GM12878 (cell line): ENCODE measurements at regions of chr20 and their contacts with region 1.

Region 1: DNA sequence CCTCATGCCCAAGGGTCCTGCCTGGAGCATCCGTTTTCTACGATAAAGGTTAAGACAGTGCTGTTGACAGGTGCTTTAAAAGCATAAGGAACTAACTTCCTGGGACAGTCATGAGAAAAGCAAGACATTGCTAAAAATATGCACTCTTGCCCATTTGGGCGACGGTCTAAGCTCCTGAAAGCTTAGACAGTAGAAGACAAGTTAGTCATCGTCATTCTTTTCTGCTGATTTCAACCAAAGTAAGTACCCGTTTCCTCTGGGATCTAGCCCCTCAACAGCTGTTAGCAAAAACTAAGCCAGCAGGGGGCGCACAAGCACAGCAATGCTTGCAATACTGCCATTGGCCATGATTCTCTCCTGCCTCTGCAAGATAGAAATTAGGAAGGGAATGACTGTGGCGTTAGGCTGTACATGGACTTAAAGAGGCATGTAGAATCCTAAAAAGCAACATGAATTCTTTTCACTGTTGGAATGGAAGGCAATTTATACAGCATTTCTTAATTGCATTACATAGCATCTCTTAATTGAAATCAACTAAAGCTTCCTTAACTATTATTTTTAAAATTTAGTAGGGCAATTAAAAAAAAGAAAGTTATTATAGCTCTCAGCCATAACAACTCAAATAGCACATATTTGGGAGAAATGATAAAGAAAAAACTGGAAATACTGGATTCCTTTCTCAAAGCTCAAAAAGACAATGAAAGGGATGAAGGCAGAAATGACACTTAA is 147.8 kb upstream of the RALGAPA2 start:
- DNase-seq: peak; percentile 15
- ATAC-seq: peak; percentile 98
- H3K4me3 ChIP-seq: no peak overlapping the region
- H3K27ac ChIP-seq: no peak overlapping the region
- H3K4me1 ChIP-seq: no peaks in the 10 kb centered on the region
- H3K27me3 ChIP-seq: no peaks in the 10 kb centered on the region
- CTCF ChIP-seq: peak; percentile 85 to 94 (median 88)
- EP300 ChIP-seq: no peak
- POLR2A ChIP-seq: no peak
- RAD21 ChIP-seq: peak; percentile 84

Region 2: DNA sequence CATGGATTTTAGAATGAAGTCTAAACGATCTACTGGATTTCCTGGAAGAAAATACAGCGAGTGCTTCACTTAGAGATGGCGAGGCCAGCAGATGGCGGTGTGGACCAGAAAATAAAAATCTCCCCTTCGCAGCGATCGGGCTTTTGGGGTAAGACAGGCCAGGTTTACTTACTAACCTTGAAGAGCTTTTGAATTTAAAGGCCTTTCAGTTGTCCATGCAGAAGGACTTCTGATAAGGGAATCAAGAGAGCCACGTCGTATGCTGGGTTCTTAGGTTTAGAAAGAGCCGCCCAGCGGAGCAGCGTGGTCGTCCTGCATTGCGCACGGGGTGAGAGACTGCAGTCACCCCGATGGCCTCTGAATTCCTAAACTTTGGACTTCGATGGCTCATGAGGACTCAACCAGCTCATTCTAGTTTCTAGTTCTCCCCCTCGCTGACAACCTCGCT is 22.6 kb before region 1 on chr20:
- CTCF ChIA-PET with region 1: interaction called, 12 read pairs
- POLR2A ChIA-PET with region 1: no interaction called
- RAD21 ChIA-PET with region 1: no interaction called
- SMC1A ChIA-PET with region 1: interaction called, 5 read pairs
- in situ Hi-C with region 1: no loop called
- intact Hi-C with region 1: no loop called
- DNase-seq: no peak
- ATAC-seq: peak; percentile 36; the same call in 1 of the 3 replicates
- H3K4me3 ChIP-seq: no peak overlapping the region
- H3K27ac ChIP-seq: no peak overlapping the region
- H3K4me1 ChIP-seq: no peaks in the 10 kb centered on the region
- H3K27me3 ChIP-seq: peaks cover 0 to 2% of the 10 kb centered on the region in 2 experiments; a peak in 2 of 4 replicates
- CTCF ChIP-seq: peak; percentile 39 to 57 (median 45)
- EP300 ChIP-seq: no peak
- POLR2A ChIP-seq: no peak
- RAD21 ChIP-seq: peak; percentile 52

Region 3: DNA sequence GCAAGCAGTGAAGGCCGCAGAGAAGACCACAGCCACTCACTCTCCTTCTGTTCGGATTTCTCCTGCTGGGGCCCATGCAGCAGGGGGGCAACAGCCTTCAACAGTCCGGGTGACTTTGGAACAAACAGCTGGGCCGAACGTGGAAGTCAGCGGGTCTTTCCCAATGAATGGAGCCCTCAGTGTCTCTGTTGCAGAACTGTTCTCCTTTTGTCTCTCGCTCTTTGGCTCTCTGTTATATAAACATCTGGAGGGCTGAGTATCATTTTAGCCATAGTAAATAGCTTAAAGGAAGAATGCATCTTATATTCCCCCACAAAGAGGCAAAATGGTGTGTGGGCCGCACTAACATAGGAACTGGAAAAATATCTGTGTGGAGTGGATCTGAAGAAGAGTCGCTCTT is 11.1 kb before region 1 on chr20:
- CTCF ChIA-PET with region 1: interaction called, 15 read pairs
- POLR2A ChIA-PET with region 1: no interaction called
- RAD21 ChIA-PET with region 1: no interaction called
- SMC1A ChIA-PET with region 1: interaction called, 11 read pairs
- in situ Hi-C with region 1: no loop called
- intact Hi-C with region 1: no loop called
- DNase-seq: no peak
- ATAC-seq: no peak
- H3K4me3 ChIP-seq: no peak overlapping the region
- H3K27ac ChIP-seq: no peak overlapping the region
- H3K4me1 ChIP-seq: no peaks in the 10 kb centered on the region
- H3K27me3 ChIP-seq: no peaks in the 10 kb centered on the region; a peak in 1 of 4 replicates
- CTCF ChIP-seq: no peak
- EP300 ChIP-seq: no peak
- POLR2A ChIP-seq: no peak
- RAD21 ChIP-seq: no peak

Region 4: GRCh38 chr20:21031666-21032065 is 171.4 kb after region 1 on chr20:
- CTCF ChIA-PET with region 1: no interaction called
- POLR2A ChIA-PET with region 1: no interaction called
- RAD21 ChIA-PET with region 1: no interaction called
- SMC1A ChIA-PET with region 1: no interaction called
- in situ Hi-C with region 1: no loop called
- intact Hi-C with region 1: loop called (anchors 10 kb)
- DNase-seq: no peak
- ATAC-seq: no peak
- H3K4me3 ChIP-seq: no peak overlapping the region
- H3K27ac ChIP-seq: no peak overlapping the region
- H3K4me1 ChIP-seq: no peaks in the 10 kb centered on the region
- H3K27me3 ChIP-seq: peaks cover 0 to 3% of the 10 kb centered on the region in 2 experiments; a peak in 1 of 4 replicates
- CTCF ChIP-seq: no peak
- EP300 ChIP-seq: no peak
- POLR2A ChIP-seq: no peak
- RAD21 ChIP-seq: no peak

Region 5: GRCh38 chr20:21048841-21049273 is 188.6 kb after region 1 on chr20:
- CTCF ChIA-PET with region 1: interaction called, 18 read pairs
- POLR2A ChIA-PET with region 1: no interaction called
- RAD21 ChIA-PET with region 1: interaction called, 6 read pairs
- SMC1A ChIA-PET with region 1: no interaction called
- in situ Hi-C with region 1: no loop called
- intact Hi-C with region 1: no loop called
- DNase-seq: no peak
- ATAC-seq: peak; percentile 93
- H3K4me3 ChIP-seq: no peak overlapping the region
- H3K27ac ChIP-seq: no peak overlapping the region
- H3K4me1 ChIP-seq: no peaks in the 10 kb centered on the region
- H3K27me3 ChIP-seq: no peaks in the 10 kb centered on the region; a peak in 1 of 4 replicates
- CTCF ChIP-seq: peak; percentile 69 to 96 (median 92)
- EP300 ChIP-seq: no peak
- POLR2A ChIP-seq: no peak
- RAD21 ChIP-seq: peak; percentile 65

Region 6: DNA sequence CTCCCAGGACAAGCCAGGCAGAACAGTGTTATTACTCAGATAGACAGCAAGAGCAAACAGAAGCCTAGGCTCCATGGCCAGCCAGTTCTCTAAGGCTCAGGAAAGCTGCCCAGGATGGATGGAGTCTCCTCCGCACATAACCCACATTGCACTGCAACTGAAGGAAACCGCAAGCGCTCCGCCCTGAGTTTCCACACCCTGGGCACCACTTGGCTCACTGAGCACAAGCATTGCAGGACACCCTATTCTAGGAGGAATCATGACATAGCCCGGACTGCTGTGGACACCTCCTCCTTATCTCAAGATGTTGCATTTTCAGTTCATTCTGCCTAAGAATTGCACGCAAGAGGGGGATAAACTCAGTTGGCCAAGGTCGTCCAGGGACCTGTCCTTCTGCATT is 203.0 kb after region 1 on chr20:
- CTCF ChIA-PET with region 1: no interaction called
- POLR2A ChIA-PET with region 1: no interaction called
- RAD21 ChIA-PET with region 1: no interaction called
- SMC1A ChIA-PET with region 1: no interaction called
- in situ Hi-C with region 1: no loop called
- intact Hi-C with region 1: no loop called
- DNase-seq: no peak
- ATAC-seq: no peak
- H3K4me3 ChIP-seq: no peak overlapping the region
- H3K27ac ChIP-seq: no peak overlapping the region
- H3K4me1 ChIP-seq: no peaks in the 10 kb centered on the region
- H3K27me3 ChIP-seq: no peaks in the 10 kb centered on the region; a peak in 1 of 4 replicates
- CTCF ChIP-seq: no peak
- EP300 ChIP-seq: no peak
- POLR2A ChIP-seq: no peak
- RAD21 ChIP-seq: no peak

Region 7: GRCh38 chr20:21505161-21505809 is 645.0 kb after region 1 on chr20:
- CTCF ChIA-PET with region 1: interaction called, 70 read pairs
- POLR2A ChIA-PET with region 1: no interaction called
- RAD21 ChIA-PET with region 1: interaction called, 17 read pairs
- SMC1A ChIA-PET with region 1: interaction called, 23 read pairs
- in situ Hi-C with region 1: loop called (anchors 5 kb)
- intact Hi-C with region 1: loop called (anchors 1 kb)
- DNase-seq: no peak
- ATAC-seq: peak; percentile 70
- H3K4me3 ChIP-seq: no peak overlapping the region
- H3K27ac ChIP-seq: no peak overlapping the region
- H3K4me1 ChIP-seq: peaks cover 12% of the 10 kb centered on the region
- H3K27me3 ChIP-seq: peaks cover 13 to 22% of the 10 kb centered on the region in 2 experiments
- CTCF ChIP-seq: peak; percentile 98 to 99 (median 98); a peak in 5 of 6 replicates
- EP300 ChIP-seq: no peak
- POLR2A ChIP-seq: no peak
- RAD21 ChIP-seq: peak; percentile 98